CD4-positive, alpha-beta memory T cell (primary cell): ENCODE measurements at regions of chr19 and their contacts with region 1.

Region 1: GRCh38 chr19:10565567-10566407 is at the start of gene KRI1:
- DNase-seq: peak; percentile 98 to 100 (median 99)
- H3K4me3 ChIP-seq: peak within 1 kb of the TSS; percentile 95 to 97
- H3K4me3 Mint-ChIP-seq: peak within 1 kb of the TSS; percentile 90 to 99 (median 98)
- H3K27ac ChIP-seq: peak within 1 kb of the TSS; percentile 94
- H3K27ac Mint-ChIP-seq: peak within 1 kb of the TSS; percentile 95 to 99 (median 98)
- H3K4me1 ChIP-seq: peaks cover 37% of the 10 kb centered on the region
- H3K4me1 Mint-ChIP-seq: peaks cover 22 to 50% (median 33%) of the 10 kb centered on the region in 4 donors
- H3K27me3 ChIP-seq: no peaks in the 10 kb centered on the region
- H3K27me3 Mint-ChIP-seq: no peaks in the 10 kb centered on the region
- total RNA-seq, gene KRI1: 72.7 to 73.0 TPM

Region 2: DNA sequence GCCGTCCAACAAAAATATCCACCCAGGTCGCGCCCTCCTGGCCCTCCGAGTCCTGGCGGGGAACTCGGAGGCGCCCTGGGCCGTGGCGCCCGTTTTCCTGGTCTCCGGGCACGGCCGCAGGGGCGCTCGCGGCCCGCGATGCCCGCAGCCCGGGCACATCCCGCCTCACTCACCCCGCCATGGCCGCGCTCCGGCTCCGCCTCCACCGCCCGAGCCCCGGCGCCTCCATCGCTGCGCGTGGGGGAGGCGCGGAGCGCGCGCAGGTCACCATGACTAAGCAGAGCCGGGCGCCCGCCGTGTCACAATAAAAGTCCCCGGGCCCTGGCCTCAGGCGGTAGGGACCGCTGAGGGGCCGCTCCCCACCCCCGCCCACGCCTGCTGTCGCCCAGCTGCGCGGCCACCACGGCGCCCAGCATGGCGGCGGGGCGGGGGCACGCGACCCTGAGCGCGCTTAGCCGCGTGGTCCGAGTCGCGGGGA is 63.2 kb before region 1 on chr19:
- CTCF ChIA-PET with region 1: interaction called, 12 read pairs
- POLR2A ChIA-PET with region 1: interaction called, 14 read pairs
- intact Hi-C with region 1: no loop called
- DNase-seq: peak; percentile 83 to 88 (median 87)
- H3K4me3 ChIP-seq: peak overlapping the region; percentile 50 to 97
- H3K4me3 Mint-ChIP-seq: peak overlapping the region; percentile 84 to 90 (median 88)
- H3K27ac ChIP-seq: peak overlapping the region; percentile 87
- H3K27ac Mint-ChIP-seq: peak overlapping the region; percentile 81 to 94 (median 90)
- H3K4me1 ChIP-seq: peaks cover 47% of the 10 kb centered on the region
- H3K4me1 Mint-ChIP-seq: peaks cover 21 to 49% (median 35%) of the 10 kb centered on the region in 4 donors
- H3K27me3 ChIP-seq: no peaks in the 10 kb centered on the region
- H3K27me3 Mint-ChIP-seq: no peaks in the 10 kb centered on the region

Region 3: GRCh38 chr19:10543420-10544241 is 22.2 kb before region 1 on chr19 and contains the start of gene ATG4D:
- CTCF ChIA-PET with region 1: interaction called, 51 read pairs
- POLR2A ChIA-PET with region 1: interaction called, 69 read pairs
- intact Hi-C with region 1: loop called (anchors 1 kb)
- DNase-seq: peak; percentile 85 to 89 (median 85)
- H3K4me3 ChIP-seq: peak within 1 kb of the TSS; percentile 49 to 66
- H3K4me3 Mint-ChIP-seq: peak within 1 kb of the TSS; percentile 89 to 94 (median 91)
- H3K27ac ChIP-seq: peak within 1 kb of the TSS; percentile 86
- H3K27ac Mint-ChIP-seq: peak within 1 kb of the TSS; percentile 83 to 97 (median 91)
- H3K4me1 ChIP-seq: peaks cover 18% of the 10 kb centered on the region
- H3K4me1 Mint-ChIP-seq: peaks cover 9 to 20% (median 14%) of the 10 kb centered on the region in 4 donors
- H3K27me3 ChIP-seq: no peaks in the 10 kb centered on the region
- H3K27me3 Mint-ChIP-seq: peaks cover 5 to 10% of the 10 kb centered on the region in 2 donors
- total RNA-seq, gene ATG4D: 51.5 to 58.6 TPM

Region 4: GRCh38 chr19:10551698-10552301 is 14.0 kb before region 1 on chr19:
- CTCF ChIA-PET with region 1: interaction called, 9 read pairs
- POLR2A ChIA-PET with region 1: interaction called, 128 read pairs
- intact Hi-C with region 1: loop called (anchors 1 kb)
- DNase-seq: peak in 3 of 5 donors; percentile 23 to 28 (median 27)
- H3K4me3 ChIP-seq: no peak overlapping the region
- H3K4me3 Mint-ChIP-seq: peak overlapping the region in 1 of 8 donors; percentile 15
- H3K27ac ChIP-seq: peak overlapping the region; percentile 53
- H3K27ac Mint-ChIP-seq: peak overlapping the region; percentile 29 to 86 (median 63)
- H3K4me1 ChIP-seq: peaks cover 51% of the 10 kb centered on the region
- H3K4me1 Mint-ChIP-seq: peaks cover 21 to 50% (median 36%) of the 10 kb centered on the region in 4 donors
- H3K27me3 ChIP-seq: no peaks in the 10 kb centered on the region
- H3K27me3 Mint-ChIP-seq: no peaks in the 10 kb centered on the region

Region 5: GRCh38 chr19:10602330-10603083 is 36.7 kb after region 1 on chr19:
- CTCF ChIA-PET with region 1: interaction called, 4 read pairs
- POLR2A ChIA-PET with region 1: interaction called, 15 read pairs
- intact Hi-C with region 1: loop called (anchors 5 kb)
- DNase-seq: peak; percentile 82 to 84 (median 84)
- H3K4me3 ChIP-seq: peak overlapping the region; percentile 85 to 94
- H3K4me3 Mint-ChIP-seq: peak overlapping the region; percentile 98 to 99 (median 99)
- H3K27ac ChIP-seq: peak overlapping the region; percentile 96
- H3K27ac Mint-ChIP-seq: peak overlapping the region; percentile 99 to 100 (median 100)
- H3K4me1 ChIP-seq: peaks cover 29% of the 10 kb centered on the region
- H3K4me1 Mint-ChIP-seq: peaks cover 17 to 34% (median 21%) of the 10 kb centered on the region in 4 donors
- H3K27me3 ChIP-seq: no peaks in the 10 kb centered on the region
- H3K27me3 Mint-ChIP-seq: no peaks in the 10 kb centered on the region

Region 6: DNA sequence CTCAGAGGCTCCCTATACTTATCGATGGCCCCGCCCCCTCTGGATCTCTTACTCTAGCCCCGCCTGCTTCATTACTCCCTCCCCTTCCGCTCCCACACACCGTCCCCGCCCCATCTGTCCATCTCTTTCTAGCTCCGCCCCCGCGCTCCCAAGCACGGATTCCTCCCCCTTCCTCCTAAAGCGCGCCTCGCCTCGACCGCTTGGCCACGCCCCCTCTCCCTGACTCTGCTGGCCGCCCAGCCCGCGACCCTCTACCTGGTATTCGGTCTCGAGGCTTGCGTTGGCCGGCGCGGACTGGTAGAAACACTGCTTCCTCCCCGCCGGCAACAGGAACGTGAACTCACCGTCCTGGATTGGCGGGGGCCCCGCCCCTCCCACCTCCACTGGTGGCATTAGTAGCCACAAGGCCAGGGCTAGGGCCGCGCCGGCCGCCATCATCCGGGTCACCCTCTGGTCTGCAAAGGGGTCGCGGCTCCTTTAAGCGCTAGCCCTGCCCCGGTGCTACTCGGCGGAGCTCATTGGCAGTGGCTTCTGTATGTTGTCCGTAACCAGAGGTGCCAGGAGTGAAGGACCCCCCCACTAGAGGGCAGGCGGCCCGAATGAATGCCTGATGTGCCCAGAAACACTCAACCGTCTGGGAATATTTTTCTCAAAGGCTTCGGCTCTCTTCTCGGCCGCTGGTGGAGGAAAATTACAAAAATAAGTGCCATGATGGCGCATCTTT is 270.1 kb after region 1 on chr19 and contains the start of gene TMED1:
- CTCF ChIA-PET with region 1: no interaction called
- POLR2A ChIA-PET with region 1: interaction called, 3 read pairs
- intact Hi-C with region 1: loop called (anchors 2 kb)
- DNase-seq: peak; percentile 94 to 95 (median 94)
- H3K4me3 ChIP-seq: peak within 1 kb of the TSS; percentile 64 to 89
- H3K4me3 Mint-ChIP-seq: peak within 1 kb of the TSS; percentile 96 to 100 (median 98)
- H3K27ac ChIP-seq: peak within 1 kb of the TSS; percentile 95
- H3K27ac Mint-ChIP-seq: peak within 1 kb of the TSS; percentile 99 to 100 (median 100)
- H3K4me1 ChIP-seq: peaks cover 17% of the 10 kb centered on the region
- H3K4me1 Mint-ChIP-seq: peaks cover 9 to 21% (median 13%) of the 10 kb centered on the region in 4 donors
- H3K27me3 ChIP-seq: no peaks in the 10 kb centered on the region
- H3K27me3 Mint-ChIP-seq: no peaks in the 10 kb centered on the region
- total RNA-seq, gene TMED1: 9.0 to 10.9 TPM

Region 7: GRCh38 chr19:10870955-10871603 is 305.3 kb after region 1 on chr19 and contains the start of gene CARM1:
- CTCF ChIA-PET with region 1: no interaction called
- POLR2A ChIA-PET with region 1: interaction called, 3 read pairs
- intact Hi-C with region 1: loop called (anchors 5 kb)
- DNase-seq: peak; percentile 99 to 100 (median 99)
- H3K4me3 ChIP-seq: peak within 1 kb of the TSS; percentile 47 to 55
- H3K4me3 Mint-ChIP-seq: peak within 1 kb of the TSS; percentile 81 to 94 (median 86)
- H3K27ac ChIP-seq: peak within 1 kb of the TSS; percentile 55
- H3K27ac Mint-ChIP-seq: peak within 1 kb of the TSS; percentile 76 to 96 (median 92)
- H3K4me1 ChIP-seq: peaks cover 20% of the 10 kb centered on the region
- H3K4me1 Mint-ChIP-seq: peaks cover 8 to 24% (median 16%) of the 10 kb centered on the region in 4 donors
- H3K27me3 ChIP-seq: no peaks in the 10 kb centered on the region
- H3K27me3 Mint-ChIP-seq: no peaks in the 10 kb centered on the region
- total RNA-seq, gene CARM1: 25.2 to 26.5 TPM